ENCODE measurements at regions of chr19 and their contacts with region 1.

Region 1: GRCh38 chr19:17511724-17512573 is 500 bp downstream of the PGLS start:
- DNase-seq: peak; percentile 95
- ATAC-seq: peak; percentile 82
- H3K4me3 Mint-ChIP-seq: peak overlapping the region; percentile 100
- H3K27ac Mint-ChIP-seq: peak overlapping the region; percentile 98
- H3K4me1 Mint-ChIP-seq: peaks cover 50% of the 10 kb centered on the region
- H3K27me3 Mint-ChIP-seq: no peaks in the 10 kb centered on the region
- CTCF ChIP-seq: no peak

Region 2: GRCh38 chr19:17405250-17406038 is 106.5 kb before region 1 on chr19 and contains the start of gene BST2:
- CTCF ChIA-PET with region 1: no interaction called
- POLR2A ChIA-PET with region 1: interaction called, 3 read pairs
- intact Hi-C with region 1: loop called (anchors 5 kb)
- DNase-seq: peak; percentile 42
- ATAC-seq: peak; percentile 86
- H3K4me3 Mint-ChIP-seq: peak within 1 kb of the TSS; percentile 92
- H3K27ac Mint-ChIP-seq: peak within 1 kb of the TSS; percentile 93
- H3K4me1 Mint-ChIP-seq: peaks cover 49% of the 10 kb centered on the region
- H3K27me3 Mint-ChIP-seq: no peaks in the 10 kb centered on the region
- CTCF ChIP-seq: no peak
- total RNA-seq, gene BST2: 120 and 121 TPM in 2 replicates

Region 3: GRCh38 chr19:17530586-17530985 is 18.6 kb after region 1 on chr19:
- CTCF ChIA-PET with region 1: interaction called, 12 read pairs
- POLR2A ChIA-PET with region 1: interaction called, 347 read pairs
- intact Hi-C with region 1: loop called (anchors 1 kb)
- DNase-seq: no peak
- ATAC-seq: no peak
- H3K4me3 Mint-ChIP-seq: peak overlapping the region; percentile 90
- H3K27ac Mint-ChIP-seq: peak overlapping the region; percentile 94
- H3K4me1 Mint-ChIP-seq: peaks cover 60% of the 10 kb centered on the region
- H3K27me3 Mint-ChIP-seq: no peaks in the 10 kb centered on the region
- CTCF ChIP-seq: no peak

Region 4: GRCh38 chr19:17539238-17540117 is 27.5 kb after region 1 on chr19:
- CTCF ChIA-PET with region 1: no interaction called
- POLR2A ChIA-PET with region 1: interaction called, 40 read pairs
- intact Hi-C with region 1: loop called (anchors 1 kb)
- DNase-seq: peak; percentile 96
- ATAC-seq: peak; percentile 86
- H3K4me3 Mint-ChIP-seq: peak overlapping the region; percentile 84
- H3K27ac Mint-ChIP-seq: peak overlapping the region; percentile 90
- H3K4me1 Mint-ChIP-seq: peaks cover 56% of the 10 kb centered on the region
- H3K27me3 Mint-ChIP-seq: no peaks in the 10 kb centered on the region
- CTCF ChIP-seq: no peak

Region 5: GRCh38 chr19:17555480-17555928 is 43.6 kb after region 1 on chr19 and contains the start of gene COLGALT1:
- CTCF ChIA-PET with region 1: no interaction called
- POLR2A ChIA-PET with region 1: interaction called, 15 read pairs
- intact Hi-C with region 1: loop called (anchors 1 kb)
- DNase-seq: peak; percentile 94
- ATAC-seq: peak; percentile 93
- H3K4me3 Mint-ChIP-seq: peak within 1 kb of the TSS; percentile 84
- H3K27ac Mint-ChIP-seq: peak within 1 kb of the TSS; percentile 75
- H3K4me1 Mint-ChIP-seq: peaks cover 23% of the 10 kb centered on the region
- H3K27me3 Mint-ChIP-seq: no peaks in the 10 kb centered on the region
- CTCF ChIP-seq: no peak
- total RNA-seq, gene COLGALT1: 69.2 and 80.3 TPM in 2 replicates

Region 6: GRCh38 chr19:17565611-17566010 is 53.7 kb after region 1 on chr19:
- CTCF ChIA-PET with region 1: no interaction called
- POLR2A ChIA-PET with region 1: no interaction called
- intact Hi-C with region 1: no loop called
- DNase-seq: no peak
- ATAC-seq: no peak
- H3K4me3 Mint-ChIP-seq: no peak overlapping the region
- H3K27ac Mint-ChIP-seq: no peak overlapping the region
- H3K4me1 Mint-ChIP-seq: no peaks in the 10 kb centered on the region
- H3K27me3 Mint-ChIP-seq: no peaks in the 10 kb centered on the region
- CTCF ChIP-seq: no peak

Region 7: DNA sequence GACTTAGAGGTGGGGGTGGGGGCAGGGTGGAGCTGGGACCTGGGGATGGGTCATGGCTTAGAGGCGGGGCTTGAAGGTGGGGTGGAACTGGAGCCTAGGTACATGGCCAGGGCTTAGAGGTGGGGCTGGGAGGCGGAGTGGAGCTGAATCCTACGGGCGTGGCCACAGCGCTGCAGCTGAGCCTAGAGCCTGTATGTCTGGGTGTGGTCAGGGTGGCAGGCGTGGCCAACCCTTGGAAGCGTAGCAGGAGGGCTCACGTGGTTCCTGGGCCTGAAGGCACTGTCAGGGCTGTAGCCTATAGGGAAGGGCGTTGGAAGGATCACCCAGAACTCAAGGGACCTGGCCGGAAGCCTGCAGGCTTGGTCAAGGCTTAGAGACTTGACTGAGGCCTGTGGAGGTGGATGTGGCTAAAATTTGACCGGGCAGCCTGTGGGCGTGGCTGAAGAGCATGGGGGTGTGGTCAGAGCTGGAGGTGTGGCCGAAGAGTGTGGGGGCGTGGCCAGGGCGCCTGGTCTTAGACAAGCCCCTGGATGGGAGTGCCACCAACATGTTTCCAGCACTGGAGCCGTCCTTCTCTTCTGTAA is 67.8 kb after region 1 on chr19:
- CTCF ChIA-PET with region 1: no interaction called
- POLR2A ChIA-PET with region 1: no interaction called
- intact Hi-C with region 1: loop called (anchors 1 kb)
- DNase-seq: peak; percentile 36
- ATAC-seq: peak; percentile 74
- H3K4me3 Mint-ChIP-seq: no peak overlapping the region
- H3K27ac Mint-ChIP-seq: no peak overlapping the region
- H3K4me1 Mint-ChIP-seq: peaks cover 9% of the 10 kb centered on the region
- H3K27me3 Mint-ChIP-seq: no peaks in the 10 kb centered on the region
- CTCF ChIP-seq: no peak